Activated T-helper 2 cell treated with anti-CD3 and anti-CD28 coated beads, Interferon-gamma antibody, Interleukin-2, Interleukin-4, amounts not matched to agents 10 μg/mL and 5 μg/mL and 100 μg/mL, durations not matched to agents 14 hours and 24 hours and 36 hours (primary cell): ENCODE measurements at regions of chrX and their contacts with region 1.

Region 1: GRCh38 chrX:79081895-79082512 is 62.5 kb upstream of the GPR174 start:
- DNase-seq: peak; percentile 10
- H3K4me3 Mint-ChIP-seq: no peak overlapping the region
- H3K27ac Mint-ChIP-seq: peak overlapping the region; percentile 65
- H3K4me1 Mint-ChIP-seq: peaks cover 19% of the 10 kb centered on the region
- H3K27me3 Mint-ChIP-seq: no peaks in the 10 kb centered on the region

Region 2: GRCh38 chrX:78555401-78555980 is 526.5 kb before region 1 on chrX:
- intact Hi-C with region 1: loop called (anchors 1 kb)
- DNase-seq: no peak
- H3K4me3 Mint-ChIP-seq: no peak overlapping the region
- H3K27ac Mint-ChIP-seq: peak overlapping the region; percentile 38
- H3K4me1 Mint-ChIP-seq: peaks cover 5% of the 10 kb centered on the region
- H3K27me3 Mint-ChIP-seq: no peaks in the 10 kb centered on the region

Region 3: GRCh38 chrX:78687586-78687985 is 394.4 kb before region 1 on chrX:
- intact Hi-C with region 1: no loop called
- DNase-seq: no peak
- H3K4me3 Mint-ChIP-seq: no peak overlapping the region
- H3K27ac Mint-ChIP-seq: no peak overlapping the region
- H3K4me1 Mint-ChIP-seq: peaks cover 1% of the 10 kb centered on the region
- H3K27me3 Mint-ChIP-seq: no peaks in the 10 kb centered on the region

Region 4: DNA sequence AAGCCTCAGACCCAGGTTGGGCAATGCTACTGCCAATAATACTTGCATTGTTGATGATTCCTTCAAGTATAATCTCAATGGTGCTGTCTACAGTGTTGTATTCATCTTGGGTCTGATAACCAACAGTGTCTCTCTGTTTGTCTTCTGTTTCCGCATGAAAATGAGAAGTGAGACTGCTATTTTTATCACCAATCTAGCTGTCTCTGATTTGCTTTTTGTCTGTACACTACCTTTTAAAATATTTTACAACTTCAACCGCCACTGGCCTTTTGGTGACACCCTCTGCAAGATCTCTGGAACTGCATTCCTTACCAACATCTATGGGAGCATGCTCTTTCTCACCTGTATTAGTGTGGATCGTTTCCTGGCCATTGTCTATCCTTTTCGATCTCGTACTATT is 327.1 kb before region 1 on chrX:
- intact Hi-C with region 1: no loop called
- DNase-seq: no peak
- H3K4me3 Mint-ChIP-seq: no peak overlapping the region
- H3K27ac Mint-ChIP-seq: no peak overlapping the region
- H3K4me1 Mint-ChIP-seq: peaks cover 4% of the 10 kb centered on the region
- H3K27me3 Mint-ChIP-seq: no peaks in the 10 kb centered on the region

Region 5: DNA sequence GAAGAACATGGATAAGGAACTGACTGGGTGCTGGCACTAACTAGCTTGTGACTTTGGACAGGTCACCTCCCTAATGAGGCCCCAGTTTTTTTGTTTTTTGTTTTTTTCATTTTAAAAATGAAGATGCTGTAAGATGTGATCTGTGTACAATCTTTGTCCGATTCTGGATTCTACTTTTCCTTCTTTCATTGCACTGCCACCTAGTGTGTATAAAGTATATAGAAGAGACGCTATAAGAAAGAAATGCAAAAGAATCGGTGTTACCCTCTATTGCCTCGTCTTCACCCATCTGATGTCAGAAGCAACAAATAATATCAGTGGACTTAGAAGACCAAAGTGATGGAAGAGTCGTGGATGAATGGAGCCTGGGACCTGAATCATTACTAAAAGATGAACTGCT is 195.5 kb before region 1 on chrX:
- intact Hi-C with region 1: loop called (anchors 5 kb)
- DNase-seq: no peak
- H3K4me3 Mint-ChIP-seq: no peak overlapping the region
- H3K27ac Mint-ChIP-seq: no peak overlapping the region
- H3K4me1 Mint-ChIP-seq: peaks cover 8% of the 10 kb centered on the region
- H3K27me3 Mint-ChIP-seq: no peaks in the 10 kb centered on the region

Region 6: GRCh38 chrX:78979789-78980464 is 102.1 kb before region 1 on chrX:
- intact Hi-C with region 1: loop called (anchors 5 kb)
- DNase-seq: no peak
- H3K4me3 Mint-ChIP-seq: peak overlapping the region; percentile 69
- H3K27ac Mint-ChIP-seq: peak overlapping the region; percentile 100
- H3K4me1 Mint-ChIP-seq: peaks cover 22% of the 10 kb centered on the region
- H3K27me3 Mint-ChIP-seq: no peaks in the 10 kb centered on the region

Region 7: DNA sequence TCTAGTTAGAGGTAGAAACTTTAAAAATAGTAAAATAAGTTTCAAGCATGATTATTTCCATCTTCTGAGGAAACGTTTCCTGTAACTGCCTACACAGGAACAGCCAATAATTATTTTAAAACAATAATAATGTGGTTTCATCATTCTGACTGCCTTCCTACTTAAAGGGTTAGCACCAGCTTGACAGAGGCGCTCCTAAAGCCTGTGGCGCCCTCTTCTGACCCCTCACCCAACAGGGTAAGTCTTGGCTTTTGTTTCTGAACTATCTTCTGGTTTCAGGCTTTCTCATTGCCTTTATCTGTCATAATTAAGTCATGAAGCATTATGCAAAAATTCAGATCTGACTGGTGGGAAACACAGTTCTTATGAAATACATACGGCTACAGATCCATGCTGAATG is 188.4 kb after region 1 on chrX:
- intact Hi-C with region 1: loop called (anchors 1 kb)
- DNase-seq: peak; percentile 49
- H3K4me3 Mint-ChIP-seq: no peak overlapping the region
- H3K27ac Mint-ChIP-seq: no peak overlapping the region
- H3K4me1 Mint-ChIP-seq: peaks cover 24% of the 10 kb centered on the region
- H3K27me3 Mint-ChIP-seq: no peaks in the 10 kb centered on the region